ENCODE measurements at regions of chr6 and their contacts with region 1.

Region 1: GRCh38 chr6:113744861-113745260 is 112.3 kb upstream of the MARCKS start:
- DNase-seq: no peak
- H3K4me3 ChIP-seq: no peak overlapping the region
- H3K27ac ChIP-seq: no peak overlapping the region
- H3K4me1 ChIP-seq: no peaks in the 10 kb centered on the region
- H3K27me3 ChIP-seq: no peaks in the 10 kb centered on the region
- CTCF ChIP-seq: no peak

Region 2: GRCh38 chr6:113340371-113340770 is 404.5 kb before region 1 on chr6:
- CTCF ChIA-PET with region 1: interaction called, 11 read pairs
- POLR2A ChIA-PET with region 1: no interaction called
- intact Hi-C with region 1: no loop called
- DNase-seq: no peak
- H3K4me3 ChIP-seq: no peak overlapping the region
- H3K27ac ChIP-seq: no peak overlapping the region
- H3K4me1 ChIP-seq: no peaks in the 10 kb centered on the region
- H3K27me3 ChIP-seq: no peaks in the 10 kb centered on the region
- CTCF ChIP-seq: no peak

Region 3: DNA sequence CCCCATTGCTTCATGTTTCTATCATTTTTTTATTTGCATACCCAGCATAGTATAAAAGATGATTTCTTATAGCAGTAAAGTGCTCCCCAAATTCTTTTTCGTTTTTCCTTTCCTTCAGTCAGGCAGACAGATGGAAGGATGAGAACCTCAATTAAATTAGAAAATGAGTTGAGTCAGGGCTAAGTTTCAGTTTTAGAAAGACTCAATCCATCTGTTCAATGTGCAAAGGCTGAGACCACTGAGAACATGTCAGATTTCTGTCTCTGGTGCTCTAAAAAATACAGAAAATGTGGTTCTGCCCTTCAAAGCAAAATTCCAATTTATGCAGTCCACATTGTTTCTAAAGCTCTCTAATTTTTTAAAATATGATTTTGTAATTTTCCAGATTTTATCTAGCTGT is 855.5 kb after region 1 on chr6:
- CTCF ChIA-PET with region 1: no interaction called
- POLR2A ChIA-PET with region 1: no interaction called
- intact Hi-C with region 1: no loop called
- DNase-seq: no peak
- H3K4me3 ChIP-seq: no peak overlapping the region
- H3K27ac ChIP-seq: no peak overlapping the region
- H3K4me1 ChIP-seq: no peaks in the 10 kb centered on the region
- H3K27me3 ChIP-seq: no peaks in the 10 kb centered on the region
- CTCF ChIP-seq: no peak